AG04449 (cell line): ENCODE measurements at regions of chr20 and their contacts with region 1.

Region 1: DNA sequence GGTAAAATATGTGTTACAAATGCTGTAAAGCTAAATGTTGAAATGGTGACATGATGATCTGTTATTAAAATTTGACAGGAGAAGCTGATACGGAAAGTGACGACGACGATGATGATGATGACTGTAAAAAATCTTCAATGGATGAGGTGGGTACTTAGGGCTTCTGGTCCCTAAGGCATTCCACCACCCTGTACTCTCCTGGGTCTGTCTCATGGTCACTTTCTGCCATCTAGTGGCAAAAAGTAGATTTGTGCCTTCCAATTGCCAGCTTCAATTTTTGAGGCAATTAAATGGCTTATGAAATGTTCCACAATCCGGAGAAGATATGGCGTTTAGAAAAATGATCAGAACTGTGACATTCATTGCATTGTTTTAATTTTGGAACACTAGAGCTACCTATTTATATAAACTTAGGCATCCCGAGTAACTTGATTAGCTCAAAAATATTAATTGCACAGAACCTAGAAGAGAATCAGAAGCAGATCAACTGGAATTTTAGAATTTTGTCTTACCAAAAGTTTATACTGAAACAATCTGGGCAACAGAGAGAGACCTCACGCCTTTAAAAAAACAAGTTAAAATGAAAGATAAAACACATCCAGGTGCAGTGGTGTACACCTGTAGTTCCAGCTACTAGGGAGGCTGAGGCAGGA is 346.5 kb upstream of the PLCB4 start:
- DNase-seq: no peak
- H3K4me3 ChIP-seq: no peak overlapping the region
- CTCF ChIP-seq: peak; percentile 64

Region 2: DNA sequence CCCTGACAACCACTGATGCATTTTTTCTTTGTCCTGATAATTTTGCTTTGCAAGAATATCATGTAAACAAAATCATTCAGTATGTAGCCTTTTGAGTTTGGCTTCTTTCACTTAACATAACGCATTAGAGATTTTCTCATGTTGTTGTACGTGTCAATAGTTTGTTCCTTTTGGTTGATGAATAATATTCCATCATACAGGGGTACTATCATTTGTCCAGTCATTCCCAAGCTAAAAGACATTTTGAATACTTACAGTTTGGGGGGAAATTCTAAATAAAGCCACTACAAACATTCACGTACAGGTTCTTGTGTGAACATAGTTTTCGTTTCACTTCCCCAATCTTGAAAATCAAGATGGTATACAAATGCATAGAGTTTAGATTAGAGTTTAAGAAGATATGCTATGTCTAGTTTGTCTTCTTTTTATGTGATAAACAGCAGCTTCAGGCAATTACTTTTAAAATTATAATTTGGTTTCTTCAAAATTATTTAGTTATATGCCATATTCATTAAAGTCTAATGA is 787.3 kb before region 1 on chr20:
- CTCF ChIA-PET with region 1: interaction called, 290 read pairs
- POLR2A ChIA-PET with region 1: no interaction called
- DNase-seq: no peak
- H3K4me3 ChIP-seq: no peak overlapping the region
- CTCF ChIP-seq: no peak

Region 3: GRCh38 chr20:8043687-8044282 is 678.6 kb before region 1 on chr20:
- CTCF ChIA-PET with region 1: interaction called, 315 read pairs
- POLR2A ChIA-PET with region 1: no interaction called
- DNase-seq: no peak
- H3K4me3 ChIP-seq: no peak overlapping the region
- CTCF ChIP-seq: peak; percentile 29

Region 4: GRCh38 chr20:8139899-8140298 is 582.5 kb before region 1 on chr20:
- CTCF ChIA-PET with region 1: interaction called, 17 read pairs
- POLR2A ChIA-PET with region 1: no interaction called
- DNase-seq: no peak
- H3K4me3 ChIP-seq: no peak overlapping the region
- CTCF ChIP-seq: no peak

Region 5: DNA sequence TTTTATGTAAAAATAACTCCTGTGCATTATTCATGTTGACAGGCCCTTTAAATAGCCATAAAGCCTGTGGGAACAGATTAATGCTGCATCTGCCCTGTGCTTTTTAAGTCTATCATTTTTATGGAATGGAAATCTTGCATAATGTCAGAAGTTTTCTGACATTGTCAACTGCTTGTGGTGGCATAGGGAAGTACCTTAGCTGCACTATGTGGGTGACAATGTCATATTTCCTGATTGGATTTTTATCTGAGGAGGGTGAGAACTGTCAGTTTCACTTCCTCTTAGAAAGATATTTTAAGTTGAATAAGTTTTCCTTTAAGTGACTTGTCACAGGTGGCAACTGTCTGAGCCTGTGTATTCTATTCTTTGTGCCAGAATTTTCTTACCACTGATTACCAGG is 322.5 kb before region 1 on chr20:
- CTCF ChIA-PET with region 1: interaction called, 22 read pairs
- POLR2A ChIA-PET with region 1: no interaction called
- DNase-seq: no peak
- H3K4me3 ChIP-seq: no peak overlapping the region
- CTCF ChIP-seq: no peak

Region 6: GRCh38 chr20:8512003-8512402 is 210.4 kb before region 1 on chr20:
- CTCF ChIA-PET with region 1: no interaction called
- POLR2A ChIA-PET with region 1: no interaction called
- DNase-seq: no peak
- H3K4me3 ChIP-seq: no peak overlapping the region
- CTCF ChIP-seq: no peak

Region 7: DNA sequence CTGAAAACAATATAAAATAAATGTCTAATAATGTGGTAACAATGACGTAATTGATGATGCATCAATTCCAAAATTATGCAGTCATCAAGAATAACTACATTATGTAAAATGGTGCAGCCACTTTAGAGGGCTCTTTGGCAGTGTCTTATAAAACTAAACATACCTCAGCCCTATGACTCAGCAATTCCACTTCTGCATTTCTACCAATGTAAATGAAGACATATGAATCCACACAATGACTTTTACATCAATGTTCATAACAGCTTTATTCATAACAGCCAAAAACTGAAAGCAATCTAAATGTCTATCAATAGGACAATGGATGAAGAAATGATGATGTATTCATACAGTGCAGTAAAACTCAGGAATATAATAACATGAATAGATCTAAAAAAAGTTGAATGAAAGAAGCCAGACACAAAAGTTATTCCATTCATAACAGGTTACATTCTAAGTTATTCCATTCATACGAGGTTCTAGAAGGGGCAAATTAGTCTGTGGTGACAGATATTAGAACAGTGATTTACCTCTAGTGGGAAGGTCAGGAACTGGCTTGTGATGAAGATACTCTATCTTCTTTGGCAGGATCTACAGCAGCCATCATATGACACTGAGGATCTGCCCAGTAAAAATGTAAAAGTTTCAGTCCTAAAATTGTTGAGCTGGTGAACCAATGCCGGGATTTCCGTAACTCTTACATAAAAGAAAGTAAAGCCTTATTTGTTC is 194.2 kb before region 1 on chr20:
- CTCF ChIA-PET with region 1: interaction called, 28 read pairs
- POLR2A ChIA-PET with region 1: no interaction called
- DNase-seq: peak; percentile 58
- H3K4me3 ChIP-seq: no peak overlapping the region
- CTCF ChIP-seq: no peak

Region 8: DNA sequence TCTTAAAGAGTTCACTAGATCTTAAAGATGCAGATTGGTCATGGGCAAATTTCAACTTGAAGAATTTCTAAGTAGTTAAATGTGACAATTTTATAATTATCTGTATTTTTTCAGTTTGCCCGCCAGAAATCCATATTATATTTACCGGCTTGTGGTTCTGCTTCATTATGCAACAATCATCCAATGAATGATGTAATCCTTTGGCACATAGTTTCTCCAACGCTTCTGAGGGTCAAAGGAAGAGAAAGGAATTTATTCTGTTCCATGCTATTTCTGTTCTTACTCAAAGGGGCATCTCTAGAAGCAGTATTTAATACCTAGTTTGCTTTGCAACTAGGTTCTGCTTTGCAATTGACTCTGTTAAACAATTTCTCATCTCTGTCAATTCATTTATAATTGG is 12.8 kb before region 1 on chr20:
- CTCF ChIA-PET with region 1: interaction called, 140 read pairs
- POLR2A ChIA-PET with region 1: no interaction called
- DNase-seq: no peak
- H3K4me3 ChIP-seq: no peak overlapping the region
- CTCF ChIP-seq: no peak

Region 9: DNA sequence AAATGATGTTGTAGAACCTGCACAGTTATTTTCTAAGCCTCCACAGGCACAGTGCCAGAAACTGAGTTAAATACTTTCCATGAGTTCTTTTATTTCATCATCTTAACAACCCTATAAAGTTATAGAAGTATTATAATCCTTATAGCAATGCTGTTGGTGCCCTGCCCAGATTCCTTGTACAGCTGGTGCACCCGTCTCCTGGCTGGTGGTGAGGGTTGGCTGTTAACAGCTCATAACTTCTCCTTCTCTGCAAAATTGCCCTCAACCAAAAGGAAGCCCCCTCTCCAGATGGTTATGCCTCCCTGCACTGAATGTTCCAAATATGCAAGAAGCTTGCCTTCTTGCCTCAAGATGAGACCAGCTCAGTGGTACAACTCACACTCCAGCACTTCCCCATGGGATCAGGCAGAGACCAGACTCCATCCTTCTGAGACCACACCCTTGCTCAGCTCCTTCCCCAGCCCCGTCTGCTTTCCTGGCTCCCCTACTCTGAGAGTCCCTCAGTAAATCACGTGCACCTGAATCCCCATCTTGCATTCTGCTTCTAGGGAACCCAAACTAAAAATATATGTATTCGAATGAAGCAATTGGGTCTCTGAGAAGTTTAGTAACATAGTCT is 42.1 kb after region 1 on chr20:
- CTCF ChIA-PET with region 1: no interaction called
- POLR2A ChIA-PET with region 1: no interaction called
- DNase-seq: no peak
- H3K4me3 ChIP-seq: no peak overlapping the region
- CTCF ChIP-seq: no peak